WTC11 (cell line): ENCODE measurements at regions of chr1 and their contacts with region 1.

Region 1: DNA sequence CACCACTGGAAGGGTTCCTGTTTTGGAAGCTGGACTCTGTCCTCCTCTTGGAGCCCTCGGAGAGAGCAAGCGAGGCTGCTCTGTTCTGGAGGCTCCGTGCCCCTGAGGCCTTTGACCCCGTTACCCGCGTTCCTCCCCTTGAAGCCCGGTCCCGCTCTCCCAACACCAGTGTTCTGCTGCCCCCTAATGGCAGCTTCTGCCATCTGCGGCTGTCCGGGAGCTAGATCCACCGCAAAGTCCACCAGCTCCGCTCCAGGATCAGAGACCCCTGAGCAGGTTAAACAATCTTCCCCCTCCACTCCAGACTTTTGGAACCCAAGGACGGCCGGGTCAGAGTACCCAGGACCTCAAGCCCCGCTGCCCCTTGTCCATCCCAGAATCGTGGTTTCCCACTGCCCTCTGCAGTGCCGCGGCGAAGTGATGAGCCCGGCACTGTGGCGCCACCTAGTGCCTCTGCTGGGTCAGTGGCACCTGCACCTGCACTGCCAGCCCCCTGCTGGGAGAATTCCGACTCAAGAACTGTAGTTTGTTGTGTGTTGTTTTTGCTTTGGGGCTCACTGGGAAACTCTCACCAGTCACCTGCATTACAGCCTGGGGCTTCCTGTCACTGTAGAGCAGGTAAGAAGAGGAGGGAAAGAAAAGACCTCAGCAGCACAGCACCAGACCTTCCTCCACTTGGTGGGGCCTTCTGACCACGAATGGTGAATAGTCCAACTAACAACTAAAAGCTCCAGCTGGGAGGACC is 63.5 kb upstream of the NFASC start:
- DNase-seq: peak; percentile 92
- ATAC-seq: peak; percentile 84
- H3K4me3 Mint-ChIP-seq: peak overlapping the region; percentile 77
- H3K27ac Mint-ChIP-seq: no peak overlapping the region
- H3K4me1 Mint-ChIP-seq: peaks cover 13% of the 10 kb centered on the region
- H3K27me3 Mint-ChIP-seq: peaks cover 15% of the 10 kb centered on the region
- CTCF ChIP-seq: peak; percentile 99

Region 2: DNA sequence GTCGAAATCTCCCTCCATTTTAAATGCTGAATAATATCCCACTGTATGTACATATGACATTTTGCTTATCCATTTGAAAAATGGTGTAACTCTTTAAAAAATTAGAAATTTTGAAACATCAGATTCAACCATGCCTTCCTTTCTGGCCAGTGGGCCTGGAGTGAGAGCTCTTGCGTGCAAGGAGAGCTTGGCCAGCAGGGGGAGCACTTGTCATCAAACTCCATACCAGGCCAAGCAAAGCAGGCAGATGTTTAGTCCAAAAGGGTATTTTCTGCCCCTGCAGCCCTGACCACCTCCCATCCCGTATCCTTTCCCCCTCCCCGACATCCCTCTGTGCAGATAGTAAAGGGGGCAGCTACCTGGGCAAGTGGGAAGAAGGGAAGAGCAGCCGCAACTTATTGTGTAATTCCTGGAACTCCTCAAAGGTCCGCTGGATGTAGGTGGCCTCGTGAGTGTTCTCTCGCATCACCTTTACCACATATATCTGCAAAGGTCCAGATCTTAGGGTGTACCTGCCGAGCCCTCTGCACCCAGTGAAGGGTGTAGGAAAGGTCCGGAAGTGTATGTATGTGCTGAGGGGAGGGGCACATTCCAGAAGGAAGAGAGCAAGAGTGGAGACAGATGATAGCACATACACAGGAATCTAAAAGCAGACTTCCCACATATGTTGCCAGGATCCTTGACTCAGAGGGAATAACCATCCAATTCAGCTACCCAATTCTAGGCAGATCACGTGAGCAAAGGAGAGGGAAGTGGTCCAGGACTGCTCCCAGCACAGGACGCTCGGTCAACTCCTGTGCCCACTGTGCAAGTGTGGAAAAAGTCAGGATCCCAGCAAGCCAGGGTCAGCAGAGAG is 375.6 kb before region 1 on chr1:
- CTCF ChIA-PET with region 1: interaction called, 10 read pairs
- POLR2A ChIA-PET with region 1: no interaction called
- DNase-seq: peak; percentile 84
- ATAC-seq: peak; percentile 90
- H3K4me3 Mint-ChIP-seq: no peak overlapping the region
- H3K27ac Mint-ChIP-seq: peak overlapping the region; percentile 69; the same call in 1 of the 2 replicates
- H3K4me1 Mint-ChIP-seq: no peaks in the 10 kb centered on the region
- H3K27me3 Mint-ChIP-seq: no peaks in the 10 kb centered on the region
- CTCF ChIP-seq: peak; percentile 89

Region 3: GRCh38 chr1:204578867-204579664 is 228.0 kb before region 1 on chr1:
- CTCF ChIA-PET with region 1: interaction called, 31 read pairs
- POLR2A ChIA-PET with region 1: no interaction called
- DNase-seq: peak; percentile 39
- ATAC-seq: peak; percentile 34
- H3K4me3 Mint-ChIP-seq: no peak overlapping the region
- H3K27ac Mint-ChIP-seq: no peak overlapping the region
- H3K4me1 Mint-ChIP-seq: peaks cover 60% of the 10 kb centered on the region
- H3K27me3 Mint-ChIP-seq: peaks cover 27% of the 10 kb centered on the region
- CTCF ChIP-seq: no peak

Region 4: DNA sequence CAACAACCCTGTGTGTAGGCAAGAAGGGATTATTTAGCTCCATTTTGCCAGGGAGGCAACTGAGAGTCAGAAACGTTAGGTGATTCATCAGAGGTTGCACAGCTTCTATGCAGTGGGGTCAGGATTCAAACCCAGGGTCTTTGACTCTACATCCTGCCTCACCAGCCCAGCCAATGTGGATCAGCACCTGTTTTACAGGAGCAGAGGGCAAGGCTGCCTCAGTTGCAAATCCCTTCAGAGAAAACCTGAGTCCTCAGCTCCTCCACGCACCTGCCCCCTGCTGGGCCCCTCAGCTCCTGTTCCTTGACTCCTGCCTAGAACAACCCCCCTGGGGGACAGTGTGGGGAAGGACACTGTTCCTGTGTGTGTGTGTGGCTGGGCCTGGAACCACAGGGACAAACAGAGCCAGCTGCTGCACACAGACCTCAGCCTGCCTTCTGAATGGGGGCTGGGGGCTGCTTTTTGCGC is 183.2 kb before region 1 on chr1:
- CTCF ChIA-PET with region 1: interaction called, 30 read pairs
- POLR2A ChIA-PET with region 1: no interaction called
- DNase-seq: peak; percentile 63
- ATAC-seq: peak; percentile 65
- H3K4me3 Mint-ChIP-seq: no peak overlapping the region
- H3K27ac Mint-ChIP-seq: no peak overlapping the region
- H3K4me1 Mint-ChIP-seq: peaks cover 29% of the 10 kb centered on the region
- H3K27me3 Mint-ChIP-seq: no peaks in the 10 kb centered on the region; the same call in 1 of the 2 replicates
- CTCF ChIP-seq: no peak

Region 5: DNA sequence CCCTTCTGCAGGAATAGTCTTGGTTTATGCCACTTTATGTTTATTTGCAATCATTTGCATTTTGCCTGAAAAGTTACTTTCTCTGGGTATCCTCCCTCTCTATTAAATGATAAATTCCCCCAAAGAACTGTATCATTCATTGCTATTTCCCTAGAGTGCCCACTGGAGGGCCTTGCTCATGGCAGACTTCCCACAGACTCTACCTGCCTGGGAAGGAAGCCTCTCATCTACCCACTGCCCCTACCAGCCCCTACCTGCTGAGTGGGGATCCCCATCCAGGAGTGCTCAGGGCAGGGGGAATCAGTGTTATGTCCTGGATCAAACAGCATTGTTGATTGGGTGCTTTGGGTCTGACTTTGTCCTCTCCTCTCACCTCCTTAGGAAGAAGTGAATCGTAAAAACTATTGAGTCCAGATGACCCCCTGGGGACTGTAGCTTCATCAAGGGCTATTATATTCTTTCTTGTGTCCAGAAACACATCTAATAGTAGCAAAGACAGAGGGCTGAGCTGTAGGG is 114.7 kb before region 1 on chr1:
- CTCF ChIA-PET with region 1: interaction called, 40 read pairs
- POLR2A ChIA-PET with region 1: no interaction called
- DNase-seq: no peak
- ATAC-seq: peak; percentile 66
- H3K4me3 Mint-ChIP-seq: peak overlapping the region; percentile 28
- H3K27ac Mint-ChIP-seq: no peak overlapping the region
- H3K4me1 Mint-ChIP-seq: peaks cover 28% of the 10 kb centered on the region
- H3K27me3 Mint-ChIP-seq: peaks cover 56% of the 10 kb centered on the region
- CTCF ChIP-seq: no peak

Region 6: GRCh38 chr1:204763706-204764427 is 43.2 kb before region 1 on chr1:
- CTCF ChIA-PET with region 1: interaction called, 42 read pairs
- POLR2A ChIA-PET with region 1: no interaction called
- DNase-seq: peak; percentile 85
- ATAC-seq: peak; percentile 98
- H3K4me3 Mint-ChIP-seq: peak overlapping the region; percentile 54
- H3K27ac Mint-ChIP-seq: no peak overlapping the region
- H3K4me1 Mint-ChIP-seq: peaks cover 16% of the 10 kb centered on the region
- H3K27me3 Mint-ChIP-seq: peaks cover 47% of the 10 kb centered on the region
- CTCF ChIP-seq: peak; percentile 67

Region 7: GRCh38 chr1:204941421-204942338 is 134.6 kb after region 1 on chr1:
- CTCF ChIA-PET with region 1: interaction called, 41 read pairs
- POLR2A ChIA-PET with region 1: no interaction called
- DNase-seq: peak; percentile 86
- ATAC-seq: peak; percentile 92
- H3K4me3 Mint-ChIP-seq: no peak overlapping the region
- H3K27ac Mint-ChIP-seq: no peak overlapping the region
- H3K4me1 Mint-ChIP-seq: peaks cover 7% of the 10 kb centered on the region; the same call in 1 of the 2 replicates
- H3K27me3 Mint-ChIP-seq: no peaks in the 10 kb centered on the region
- CTCF ChIP-seq: peak; percentile 93